ENCODE measurements at regions of chr7 and their contacts with region 1.

Region 1: DNA sequence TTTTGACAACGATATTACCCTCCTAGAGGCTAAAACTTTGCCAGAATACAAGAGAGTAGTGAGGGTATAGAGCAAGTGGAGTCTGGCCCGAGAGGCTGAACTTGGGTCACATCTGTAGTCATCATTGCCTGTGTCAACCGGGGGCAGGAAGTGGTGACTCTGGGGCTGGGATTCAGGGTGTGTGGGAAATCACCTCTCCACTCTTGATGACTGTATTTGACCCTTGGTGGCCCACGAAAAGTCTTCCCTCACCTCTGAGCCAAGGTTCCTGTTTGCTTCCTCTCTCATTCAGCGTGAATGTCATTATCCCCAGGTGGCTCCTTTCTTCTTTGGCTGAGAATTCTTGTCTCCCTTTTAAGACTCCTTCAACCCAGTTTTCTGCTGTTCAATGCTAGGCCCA is 240.4 kb downstream of the ABCA13 start:
- DNase-seq: no peak
- H3K4me3 ChIP-seq: no peak overlapping the region
- CTCF ChIP-seq: no peak

Region 2: DNA sequence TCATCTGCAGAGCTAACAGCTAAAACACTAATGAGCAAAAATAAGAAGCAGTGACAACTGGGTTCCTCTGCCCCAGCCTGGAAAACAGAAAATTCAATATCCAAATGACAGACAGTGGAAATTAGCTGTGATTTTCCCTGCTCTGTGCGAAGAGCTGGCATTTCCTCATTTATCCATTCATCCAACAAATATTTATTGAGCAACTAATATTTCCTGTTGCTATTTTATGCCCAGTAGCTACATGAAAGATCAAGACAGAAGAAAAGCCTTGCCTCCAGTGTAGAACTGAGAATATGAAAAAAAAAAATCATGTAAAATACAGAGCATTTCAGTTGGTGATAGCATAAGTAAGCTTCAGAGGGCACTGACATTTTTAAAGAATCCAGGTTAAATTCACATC is 99.5 kb before region 1 on chr7:
- in situ Hi-C with region 1: loop called (anchors 5 kb)
- DNase-seq: no peak
- H3K4me3 ChIP-seq: no peak overlapping the region
- CTCF ChIP-seq: no peak

Region 3: GRCh38 chr7:48337012-48337621 is 74.5 kb before region 1 on chr7:
- in situ Hi-C with region 1: loop called (anchors 5 kb)
- DNase-seq: peak; percentile 13
- H3K4me3 ChIP-seq: no peak overlapping the region
- CTCF ChIP-seq: peak; percentile 85

Measured in astrocyte of the cerebellum (primary cell).